ENCODE measurements at regions of chr6 and their contacts with region 1.

Region 1: DNA sequence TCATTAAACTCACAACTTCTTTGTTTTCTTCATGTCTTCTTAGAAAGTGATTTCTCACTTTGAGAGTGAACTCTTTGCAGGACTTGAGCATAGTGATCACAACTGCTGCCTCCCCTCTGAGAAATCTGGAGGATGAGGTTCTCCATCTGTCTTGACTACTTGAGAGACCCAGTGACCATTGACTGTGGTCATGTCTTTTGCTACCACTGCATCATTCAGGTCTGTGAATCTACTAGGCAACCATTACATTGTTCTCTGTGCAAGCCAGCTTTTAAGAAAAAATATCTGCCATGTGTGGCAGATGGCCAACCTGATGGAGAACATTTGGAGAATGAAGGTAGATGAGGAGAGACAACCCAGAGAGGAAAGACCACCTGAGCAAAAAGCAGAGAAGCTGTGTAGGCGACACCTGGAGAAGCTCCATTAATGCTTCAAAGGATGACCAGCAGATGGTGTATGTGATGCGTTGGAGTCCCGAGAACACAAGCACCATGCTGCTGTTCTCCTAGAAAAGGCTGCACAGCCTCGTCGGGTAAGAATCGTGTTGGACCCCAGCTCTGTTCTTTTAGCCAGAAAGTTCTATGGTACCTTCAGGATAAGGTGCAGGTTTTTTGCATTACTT is 25.1 kb upstream of the TRIM26 start:
- DNase-seq: peak; percentile 51
- ATAC-seq: peak; percentile 78
- H3K4me3 Mint-ChIP-seq: no peak overlapping the region
- H3K27ac Mint-ChIP-seq: no peak overlapping the region
- H3K4me1 Mint-ChIP-seq: no peaks in the 10 kb centered on the region
- H3K27me3 Mint-ChIP-seq: peaks cover 37% of the 10 kb centered on the region

Region 2: GRCh38 chr6:30227763-30228487 is 10.4 kb before region 1 on chr6:
- CTCF ChIA-PET with region 1: interaction called, 23 read pairs
- POLR2A ChIA-PET with region 1: no interaction called
- DNase-seq: no peak
- ATAC-seq: no peak
- H3K4me3 Mint-ChIP-seq: no peak overlapping the region
- H3K27ac Mint-ChIP-seq: no peak overlapping the region
- H3K4me1 Mint-ChIP-seq: peaks cover 6% of the 10 kb centered on the region
- H3K27me3 Mint-ChIP-seq: peaks cover 17% of the 10 kb centered on the region